ENCODE measurements at regions of chr18 and their contacts with region 1.

Region 1: GRCh38 chr18:75422341-75422910 is 5.1 kb downstream of the SMIM21 start:
- DNase-seq: no peak

Region 2: DNA sequence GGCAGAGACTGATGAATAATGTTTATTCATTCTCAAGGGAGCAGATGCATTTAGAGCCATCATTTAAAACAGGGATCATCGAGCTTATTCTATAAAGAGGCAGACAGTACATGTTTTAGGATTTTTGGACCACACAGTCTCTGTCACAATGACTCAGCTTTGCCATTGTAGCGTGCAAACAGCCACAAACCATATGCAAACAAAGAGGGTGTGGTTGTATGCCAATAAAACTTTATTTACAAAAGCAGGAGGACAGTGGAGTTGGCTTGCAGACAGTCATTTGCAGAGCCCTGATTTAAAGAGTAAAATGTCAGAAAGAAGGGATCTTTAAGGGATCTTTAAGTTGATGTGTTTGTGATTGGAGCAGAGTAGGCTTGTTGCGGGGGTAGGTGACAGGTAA is 46.4 kb before region 1 on chr18:
- intact Hi-C with region 1: no loop called
- DNase-seq: no peak

Region 3: DNA sequence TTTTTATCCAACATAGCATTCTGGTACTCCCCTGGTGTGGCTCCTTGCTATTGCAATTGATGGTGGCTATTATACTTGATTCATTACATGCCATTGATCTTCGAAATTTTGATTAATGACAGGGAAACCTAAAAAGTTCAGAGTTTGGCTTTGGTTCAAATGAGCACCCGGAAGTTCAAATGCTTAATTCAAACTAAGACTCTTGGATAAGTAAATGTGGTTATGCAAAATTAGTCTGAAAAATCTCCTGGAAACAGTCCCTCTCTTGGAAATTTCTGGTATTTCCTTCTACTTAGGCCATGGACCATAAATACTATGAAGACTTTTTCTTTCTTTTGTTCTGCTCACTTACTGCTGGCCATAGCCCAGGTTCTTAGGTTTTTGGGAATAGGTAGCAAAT is 70.4 kb after region 1 on chr18:
- intact Hi-C with region 1: loop called in 1 of 2 experiments (anchors 2 kb)
- DNase-seq: no peak

Region 4: DNA sequence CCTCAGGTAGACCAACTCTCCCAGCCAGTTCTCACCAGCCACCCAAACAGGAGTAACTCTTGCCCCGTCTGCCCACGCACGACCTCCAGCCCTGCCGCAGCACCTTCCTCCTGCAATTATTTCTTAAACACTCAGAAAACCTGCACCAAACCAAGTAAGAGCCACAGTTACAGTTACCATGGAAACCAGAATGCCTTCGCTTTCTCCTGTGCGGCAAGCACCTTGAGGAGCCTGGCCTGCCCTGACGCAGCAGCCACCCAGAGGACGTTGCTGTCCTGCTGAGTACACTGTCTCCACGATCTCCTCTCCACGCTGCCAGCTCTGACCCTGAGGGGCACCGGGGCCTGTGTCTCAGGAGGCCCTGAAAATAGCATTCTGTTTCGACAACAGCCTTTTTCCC is 99.4 kb after region 1 on chr18:
- intact Hi-C with region 1: no loop called
- DNase-seq: no peak

Measured in posterior vena cava (tissue), 2 donors.